T-cell (primary cell): ENCODE measurements at regions of chr14 and their contacts with region 1.

Region 1: DNA sequence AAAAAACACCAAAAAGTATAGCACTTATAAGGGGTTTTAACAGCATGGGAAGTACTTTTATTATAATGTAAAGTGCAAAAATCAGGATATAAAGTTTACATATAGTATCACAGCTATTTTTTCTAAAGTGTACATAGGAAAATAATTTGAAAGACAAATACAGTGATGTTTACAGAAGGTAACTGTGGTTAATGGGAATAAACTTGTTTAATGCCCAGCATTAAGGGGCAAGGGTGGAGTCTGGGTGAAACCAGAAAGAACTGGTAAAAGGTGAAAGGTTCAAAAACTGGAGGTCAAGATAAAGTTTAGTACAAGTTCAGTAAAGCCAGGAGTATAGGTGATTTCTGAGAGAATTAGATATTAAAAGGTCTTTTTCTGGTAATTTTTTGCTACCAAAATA is 30.1 kb downstream of the TOGARAM1 start:
- DNase-seq: no peak
- ATAC-seq: no peak
- H3K4me3 ChIP-seq: no peak overlapping the region
- H3K4me3 Mint-ChIP-seq: no peak overlapping the region
- H3K27ac ChIP-seq: no peak overlapping the region
- H3K27ac Mint-ChIP-seq: no peak overlapping the region
- H3K4me1 ChIP-seq: no peaks in the 10 kb centered on the region
- H3K4me1 Mint-ChIP-seq: peaks cover 9 to 13% (median 12%) of the 10 kb centered on the region in 3 donors
- H3K27me3 ChIP-seq: no peaks in the 10 kb centered on the region
- H3K27me3 Mint-ChIP-seq: no peaks in the 10 kb centered on the region

Region 2: GRCh38 chr14:44609876-44610510 is 382.1 kb before region 1 on chr14:
- CTCF ChIA-PET with region 1: no interaction called
- POLR2A ChIA-PET with region 1: interaction called in 1 of 2 experiments, 12 read pairs
- DNase-seq: no peak
- ATAC-seq: no peak
- H3K4me3 ChIP-seq: no peak overlapping the region
- H3K4me3 Mint-ChIP-seq: no peak overlapping the region
- H3K27ac ChIP-seq: no peak overlapping the region
- H3K27ac Mint-ChIP-seq: no peak overlapping the region
- H3K4me1 ChIP-seq: no peaks in the 10 kb centered on the region
- H3K4me1 Mint-ChIP-seq: no peaks in the 10 kb centered on the region
- H3K27me3 ChIP-seq: no peaks in the 10 kb centered on the region
- H3K27me3 Mint-ChIP-seq: no peaks in the 10 kb centered on the region